ENCODE measurements at regions of chr16 and their contacts with region 1.

Region 1: DNA sequence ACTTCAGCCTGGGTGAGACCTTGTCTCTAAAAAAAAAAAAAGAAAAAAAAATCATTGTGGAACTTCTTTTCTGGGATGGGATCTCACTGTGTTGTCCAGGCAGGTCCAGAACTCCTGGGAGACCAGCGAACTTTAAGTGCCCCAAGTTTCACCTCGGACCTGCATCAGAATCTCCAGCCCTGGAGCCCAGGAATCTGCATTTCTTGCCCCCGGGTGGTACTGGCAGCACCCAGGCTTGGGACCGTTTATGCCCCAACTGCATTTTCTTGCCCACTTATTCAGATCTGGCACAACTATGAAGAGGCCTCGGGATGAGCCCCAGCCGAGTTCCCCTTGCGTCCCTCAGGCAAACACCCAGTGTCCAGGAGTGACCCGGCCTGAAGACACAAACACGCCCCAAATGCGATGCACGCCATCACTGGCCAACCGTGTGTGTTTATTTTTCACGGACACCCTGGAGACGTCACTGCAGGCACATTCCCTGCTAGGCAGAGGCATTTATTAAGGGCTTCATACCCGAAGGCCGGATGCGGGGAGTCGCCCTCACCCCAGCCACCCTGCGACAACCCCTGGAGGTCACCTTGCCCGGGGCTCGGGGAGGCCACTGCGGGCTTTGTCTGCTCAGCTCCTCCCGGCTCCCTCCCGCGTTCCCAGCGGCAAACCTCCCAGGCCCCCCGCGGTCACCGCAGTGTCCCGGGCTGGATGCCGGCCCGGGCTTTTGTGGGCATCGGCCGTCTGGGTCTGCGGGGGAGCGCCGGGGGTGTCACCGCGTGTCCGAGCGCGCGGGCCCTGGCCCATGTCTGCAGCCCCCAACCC is 684 bp upstream of the SPIRE2 start:
- DNase-seq: peak in 2 of 4 experiments; percentile 42 to 55
- ATAC-seq: peak; percentile 70
- H3K4me3 ChIP-seq: peak overlapping the region; percentile 53
- H3K27ac ChIP-seq: peak overlapping the region; percentile 78
- H3K4me1 ChIP-seq: peaks cover 9 to 43% of the 10 kb centered on the region in 2 experiments
- H3K27me3 ChIP-seq: no peaks in the 10 kb centered on the region
- CTCF ChIP-seq: no peak
- EP300 ChIP-seq: no peak
- POLR2A ChIP-seq: no peak
- RAD21 ChIP-seq: no peak

Region 2: GRCh38 chr16:89749647-89750046 is 77.9 kb before region 1 on chr16:
- CTCF ChIA-PET with region 1: no interaction called
- POLR2A ChIA-PET with region 1: no interaction called
- in situ Hi-C with region 1: no loop called
- intact Hi-C with region 1: no loop called
- DNase-seq: no peak
- ATAC-seq: no peak
- H3K4me3 ChIP-seq: no peak overlapping the region
- H3K27ac ChIP-seq: no peak overlapping the region
- H3K4me1 ChIP-seq: no peaks in the 10 kb centered on the region; a peak in 1 of 5 replicates
- H3K27me3 ChIP-seq: no peaks in the 10 kb centered on the region
- CTCF ChIP-seq: no peak
- EP300 ChIP-seq: no peak
- POLR2A ChIP-seq: no peak
- RAD21 ChIP-seq: no peak

Region 3: DNA sequence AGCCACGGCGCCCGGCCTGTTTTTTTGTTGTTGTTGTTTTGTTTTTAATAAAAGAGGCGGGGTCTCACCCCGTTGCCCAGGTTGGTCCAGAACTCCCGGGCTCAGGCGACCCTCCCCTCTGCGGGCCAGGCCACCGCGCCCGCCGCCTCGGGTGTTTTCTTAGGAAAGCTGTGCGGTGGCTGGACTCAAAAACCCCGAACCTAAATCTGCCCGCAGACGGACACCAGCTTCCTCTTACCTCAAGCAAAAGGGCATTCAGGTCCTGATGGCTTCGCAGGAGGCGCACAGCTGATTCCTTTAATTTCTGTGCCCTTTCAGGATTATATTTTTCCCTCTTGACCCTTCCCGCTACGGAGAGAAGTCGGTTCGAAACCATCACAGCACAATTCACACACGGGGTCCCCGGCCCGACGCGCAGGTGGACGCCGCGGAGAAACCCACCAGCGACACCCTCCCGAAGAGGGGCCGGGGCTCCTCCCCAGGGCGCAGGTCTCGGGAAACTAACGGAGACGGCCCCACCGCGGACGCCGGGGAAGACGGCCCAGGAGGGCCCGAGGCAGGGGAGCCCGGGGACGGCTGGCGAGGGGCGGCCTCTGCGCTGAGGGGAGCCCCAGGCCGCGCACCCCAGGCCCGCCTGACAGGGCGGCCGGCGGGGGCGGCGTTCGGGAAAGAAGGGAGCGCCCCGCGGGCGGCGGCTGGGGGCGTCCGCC is 11.8 kb before region 1 on chr16:
- CTCF ChIA-PET with region 1: no interaction called
- POLR2A ChIA-PET with region 1: interaction called, 3 read pairs
- in situ Hi-C with region 1: no loop called
- intact Hi-C with region 1: loop called (anchors 1 kb)
- DNase-seq: peak in 2 of 4 experiments; percentile 36 to 47
- ATAC-seq: peak; percentile 3
- H3K4me3 ChIP-seq: peak overlapping the region; percentile 75
- H3K27ac ChIP-seq: peak overlapping the region; percentile 85
- H3K4me1 ChIP-seq: peaks cover 11 to 41% of the 10 kb centered on the region in 2 experiments; a peak in 4 of 5 replicates
- H3K27me3 ChIP-seq: no peaks in the 10 kb centered on the region
- CTCF ChIP-seq: no peak
- EP300 ChIP-seq: no peak
- POLR2A ChIP-seq: no peak
- RAD21 ChIP-seq: no peak

Measured in K562 (cell line).